PC-9 (cell line): ENCODE measurements at regions of chr11 and their contacts with region 1.

Region 1: DNA sequence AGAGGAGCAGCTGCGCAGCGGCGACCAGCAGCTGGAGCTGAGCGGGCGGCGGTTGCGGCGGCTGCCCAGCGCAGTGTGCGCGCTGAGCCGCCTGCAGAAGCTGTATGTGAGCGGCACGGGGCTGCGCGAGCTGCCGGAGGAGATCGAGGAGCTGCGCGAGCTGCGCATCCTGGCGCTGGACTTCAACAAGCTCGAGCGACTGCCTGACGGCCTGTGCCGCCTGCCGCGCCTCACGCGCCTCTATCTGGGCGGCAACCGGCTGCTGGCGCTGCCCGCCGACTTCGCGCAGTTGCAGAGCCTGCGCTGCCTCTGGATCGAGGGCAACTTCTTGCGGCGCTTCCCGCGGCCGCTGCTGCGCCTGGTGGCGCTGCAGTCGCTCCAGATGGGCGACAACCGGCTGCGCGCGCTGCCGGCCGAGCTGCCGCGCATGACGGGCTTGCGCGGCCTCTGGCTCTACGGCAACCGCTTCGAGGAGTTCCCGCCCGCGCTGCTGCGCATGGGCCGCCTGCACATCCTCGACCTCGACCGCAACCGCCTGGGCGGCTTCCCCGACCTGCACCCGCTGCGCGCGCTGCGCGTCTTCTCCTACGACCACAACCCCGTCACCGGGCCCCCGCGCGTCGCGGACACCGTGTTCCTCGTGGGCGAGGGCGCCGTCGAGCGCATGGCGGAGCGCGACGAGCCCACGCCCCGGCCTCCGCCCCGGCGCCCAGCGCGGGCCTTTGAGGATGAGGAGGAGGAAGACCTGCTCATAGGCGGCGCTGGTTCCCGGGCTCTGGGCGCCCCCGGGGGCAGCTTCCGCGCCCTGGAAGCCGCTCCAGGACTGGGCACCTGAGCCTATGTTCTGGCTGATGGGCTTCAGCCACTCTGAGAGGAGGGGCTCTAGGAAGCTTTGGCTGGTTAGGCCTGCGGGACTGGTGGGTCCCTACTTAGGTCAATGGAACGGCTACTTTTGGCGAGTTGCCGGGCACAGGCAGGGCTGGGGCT is 787 bp downstream of the LRRC10B start:
- DNase-seq: peak; percentile 73 to 83
- H3K4me3 ChIP-seq: peak overlapping the region; percentile 48; the same call in 1 of the 2 replicates
- H3K27ac ChIP-seq: no peak overlapping the region
- H3K4me1 ChIP-seq: peaks cover 43% of the 10 kb centered on the region
- H3K27me3 ChIP-seq: peaks cover 28% of the 10 kb centered on the region
- CTCF ChIP-seq: peak; percentile 57

Region 2: DNA sequence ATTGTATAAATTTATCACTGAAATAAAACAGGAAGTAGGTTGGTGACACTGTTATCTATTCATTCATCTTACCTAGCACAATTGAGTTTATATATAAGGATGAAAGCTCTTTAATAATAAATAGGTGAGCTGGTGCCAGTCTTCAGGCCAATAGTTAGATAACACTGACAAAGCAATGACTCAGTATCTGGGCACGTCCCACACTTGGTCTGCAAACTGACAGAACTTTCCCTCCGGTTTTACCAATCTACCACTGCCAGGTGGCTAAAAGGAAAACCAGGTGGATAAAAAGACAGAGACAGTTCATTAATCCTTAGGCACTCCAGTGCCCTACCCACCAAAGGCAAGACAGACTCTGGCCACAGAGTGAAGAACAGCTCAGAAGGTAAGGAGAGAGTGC is 194.1 kb before region 1 on chr11:
- CTCF ChIA-PET with region 1: no interaction called
- POLR2A ChIA-PET with region 1: no interaction called
- intact Hi-C with region 1: no loop called
- DNase-seq: no peak
- H3K4me3 ChIP-seq: no peak overlapping the region
- H3K27ac ChIP-seq: no peak overlapping the region
- H3K4me1 ChIP-seq: no peaks in the 10 kb centered on the region
- H3K27me3 ChIP-seq: no peaks in the 10 kb centered on the region
- CTCF ChIP-seq: no peak

Region 3: GRCh38 chr11:61488651-61489291 is 20.6 kb before region 1 on chr11:
- CTCF ChIA-PET with region 1: interaction called, 5 read pairs
- POLR2A ChIA-PET with region 1: interaction called, 4 read pairs
- intact Hi-C with region 1: loop called (anchors 1 kb)
- DNase-seq: peak; percentile 81 to 95
- H3K4me3 ChIP-seq: peak overlapping the region; percentile 42; the same call in 1 of the 2 replicates
- H3K27ac ChIP-seq: peak overlapping the region; percentile 88
- H3K4me1 ChIP-seq: peaks cover 53% of the 10 kb centered on the region
- H3K27me3 ChIP-seq: no peaks in the 10 kb centered on the region
- CTCF ChIP-seq: no peak